ENCODE measurements at regions of chr15 and their contacts with region 1.

Region 1: DNA sequence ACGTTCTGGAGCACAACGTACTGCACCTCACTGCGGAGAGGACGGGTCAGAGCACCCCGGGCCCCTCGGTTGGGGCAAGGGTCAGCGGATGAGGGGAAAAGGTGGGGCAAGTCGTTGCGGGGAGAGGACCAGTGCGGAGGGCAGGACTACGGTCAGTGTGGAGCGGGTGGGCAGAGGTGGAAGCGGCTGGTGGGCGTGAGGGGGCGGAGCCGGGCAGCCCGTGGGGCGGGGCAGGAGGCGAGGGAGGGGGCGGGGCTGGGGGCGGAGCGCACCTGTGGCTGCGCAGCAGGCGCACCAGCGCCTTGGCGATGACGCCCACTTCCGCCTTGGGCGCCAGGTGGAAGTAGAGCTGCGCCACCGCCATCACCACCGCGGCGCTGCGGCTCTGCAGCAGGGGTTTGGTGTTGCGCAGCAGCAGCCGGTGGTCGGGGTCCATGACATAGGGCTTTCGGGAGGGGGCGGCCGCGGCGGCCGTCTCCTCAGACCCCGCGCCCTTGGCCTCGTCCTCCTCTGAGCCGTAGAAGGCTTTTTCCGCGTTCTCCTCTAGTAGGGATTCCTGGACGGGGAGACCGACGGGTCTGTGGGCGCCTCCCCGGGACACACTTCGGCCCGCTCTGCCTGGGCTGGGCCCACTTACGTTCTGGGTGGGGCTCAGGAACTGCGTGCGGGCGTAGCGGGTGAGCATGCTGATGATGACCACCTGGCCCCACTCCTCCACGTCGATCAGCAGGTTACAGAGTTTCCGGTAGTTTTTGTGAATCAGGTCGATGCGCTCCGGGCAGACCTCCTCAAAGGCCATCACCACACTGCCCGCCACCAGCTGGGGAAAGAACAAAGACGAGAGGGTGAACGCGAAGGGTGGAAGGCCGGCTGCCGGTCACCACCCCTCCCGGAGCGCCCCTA is 29.2 kb downstream of the AP3B2 start:
- DNase-seq: no peak
- ATAC-seq: no peak
- H3K4me3 ChIP-seq: no peak overlapping the region
- H3K27ac ChIP-seq: no peak overlapping the region
- H3K4me1 ChIP-seq: no peaks in the 10 kb centered on the region
- H3K27me3 ChIP-seq: peaks cover 30% of the 10 kb centered on the region
- CTCF ChIP-seq: no peak
- POLR2A ChIP-seq: no peak
- RAD21 ChIP-seq: no peak

Region 2: DNA sequence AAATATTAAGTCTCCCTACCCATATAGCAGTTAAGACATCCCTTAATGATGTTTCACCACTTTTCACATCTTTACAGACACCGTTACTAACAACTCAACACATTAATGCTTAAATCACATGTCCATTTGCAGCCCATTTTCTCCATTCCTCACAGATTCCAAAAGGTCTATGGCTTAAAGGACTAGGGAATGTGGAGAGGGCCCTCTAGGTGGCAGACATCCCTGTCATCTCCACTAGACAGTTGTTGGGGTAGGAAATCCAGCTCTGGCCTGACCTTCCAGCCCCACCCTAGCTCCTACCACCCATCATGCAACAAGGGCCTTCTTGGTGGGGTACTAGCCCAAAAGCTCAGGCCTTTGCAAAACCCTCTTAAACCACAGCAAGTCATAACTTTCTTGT is 58.5 kb before region 1 on chr15:
- CTCF ChIA-PET with region 1: no interaction called
- POLR2A ChIA-PET with region 1: no interaction called
- dilution Hi-C with region 1: no loop called
- in situ Hi-C with region 1: no loop called
- intact Hi-C with region 1: loop called (anchors 10 kb)
- DNase-seq: no peak
- ATAC-seq: no peak
- H3K4me3 ChIP-seq: no peak overlapping the region
- H3K27ac ChIP-seq: no peak overlapping the region
- H3K4me1 ChIP-seq: no peaks in the 10 kb centered on the region
- H3K27me3 ChIP-seq: no peaks in the 10 kb centered on the region
- CTCF ChIP-seq: no peak
- POLR2A ChIP-seq: no peak
- RAD21 ChIP-seq: no peak

Region 3: DNA sequence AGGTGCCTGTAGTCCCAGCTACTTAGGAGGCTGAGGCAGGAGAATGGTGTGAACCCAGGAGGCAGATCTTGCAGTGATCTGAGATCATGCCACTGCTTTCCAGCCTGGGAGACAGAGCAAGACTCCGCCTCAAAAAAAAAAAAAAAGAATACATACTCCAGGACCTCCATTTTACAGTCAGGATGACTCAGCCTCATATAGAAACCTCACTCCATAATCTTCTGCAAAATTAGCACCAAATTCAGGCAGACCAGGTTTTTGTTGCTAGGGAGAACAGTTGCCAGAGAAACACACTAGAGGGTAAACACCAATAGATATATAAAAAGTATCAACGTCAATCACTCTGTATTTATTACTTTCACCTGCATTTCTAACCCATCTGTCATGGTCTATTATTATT is 57.5 kb after region 1 on chr15:
- CTCF ChIA-PET with region 1: no interaction called
- POLR2A ChIA-PET with region 1: no interaction called
- dilution Hi-C with region 1: no loop called
- in situ Hi-C with region 1: no loop called
- intact Hi-C with region 1: loop called (anchors 2 kb)
- DNase-seq: peak; percentile 15
- ATAC-seq: no peak
- H3K4me3 ChIP-seq: no peak overlapping the region
- H3K27ac ChIP-seq: no peak overlapping the region
- H3K4me1 ChIP-seq: no peaks in the 10 kb centered on the region
- H3K27me3 ChIP-seq: no peaks in the 10 kb centered on the region
- CTCF ChIP-seq: no peak
- POLR2A ChIP-seq: no peak
- RAD21 ChIP-seq: no peak

Region 4: DNA sequence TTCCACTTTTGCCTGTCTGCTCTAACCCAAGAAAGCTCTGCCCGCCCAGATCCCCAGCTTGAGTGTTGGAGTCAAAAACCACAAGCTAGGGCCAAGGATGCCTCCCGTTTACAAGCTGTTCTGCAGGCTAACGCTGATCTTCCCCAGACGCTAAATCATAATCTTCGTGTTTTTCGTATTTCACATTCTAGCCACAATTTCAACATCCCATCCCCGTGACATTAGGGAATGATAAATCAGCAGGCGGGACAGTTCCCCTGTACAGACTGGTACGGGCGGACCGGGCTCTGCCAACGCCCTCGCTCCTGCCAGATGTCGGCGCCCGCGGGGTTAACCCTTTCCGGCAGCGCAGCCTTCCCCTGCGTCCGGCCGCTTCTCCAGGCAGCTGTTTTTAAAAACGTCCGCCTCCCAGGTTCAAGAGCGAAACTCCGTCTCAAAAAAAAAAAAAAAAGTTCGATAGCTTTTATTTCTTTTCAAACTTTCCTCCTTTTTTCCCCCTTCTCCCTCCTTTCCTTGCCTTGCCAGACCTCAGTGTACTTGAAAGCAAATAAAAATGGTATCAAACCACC is 685.0 kb after region 1 on chr15:
- CTCF ChIA-PET with region 1: no interaction called
- POLR2A ChIA-PET with region 1: no interaction called
- dilution Hi-C with region 1: no loop called
- in situ Hi-C with region 1: no loop called
- intact Hi-C with region 1: no loop called
- DNase-seq: peak; percentile 20
- ATAC-seq: peak; percentile 83
- H3K4me3 ChIP-seq: peak overlapping the region; percentile 22
- H3K27ac ChIP-seq: no peak overlapping the region
- H3K4me1 ChIP-seq: no peaks in the 10 kb centered on the region
- H3K27me3 ChIP-seq: peaks cover 17% of the 10 kb centered on the region
- CTCF ChIP-seq: no peak
- POLR2A ChIP-seq: no peak
- RAD21 ChIP-seq: no peak